MCF 10A (cell line): ENCODE measurements at regions of chr6 and their contacts with region 1.

Region 1: GRCh38 chr6:125191916-125192609 is 38.5 kb downstream of the TPD52L1 start:
- DNase-seq: peak; percentile 90
- H3K4me3 Mint-ChIP-seq: no peak overlapping the region
- H3K27ac Mint-ChIP-seq: peak overlapping the region; percentile 77
- H3K4me1 Mint-ChIP-seq: peaks cover 30% of the 10 kb centered on the region
- H3K27me3 Mint-ChIP-seq: no peaks in the 10 kb centered on the region
- CTCF ChIP-seq: peak; percentile 75

Region 2: GRCh38 chr6:125165256-125165655 is 26.8 kb before region 1 on chr6:
- CTCF ChIA-PET with region 1: interaction called, 13 read pairs
- POLR2A ChIA-PET with region 1: interaction called, 20 read pairs
- intact Hi-C with region 1: no loop called
- DNase-seq: no peak
- H3K4me3 Mint-ChIP-seq: no peak overlapping the region
- H3K27ac Mint-ChIP-seq: no peak overlapping the region
- H3K4me1 Mint-ChIP-seq: peaks cover 17% of the 10 kb centered on the region
- H3K27me3 Mint-ChIP-seq: no peaks in the 10 kb centered on the region
- CTCF ChIP-seq: no peak

Region 3: GRCh38 chr6:125175466-125176048 is 16.5 kb before region 1 on chr6:
- CTCF ChIA-PET with region 1: interaction called, 25 read pairs
- POLR2A ChIA-PET with region 1: interaction called, 20 read pairs
- intact Hi-C with region 1: no loop called
- DNase-seq: no peak
- H3K4me3 Mint-ChIP-seq: no peak overlapping the region
- H3K27ac Mint-ChIP-seq: no peak overlapping the region
- H3K4me1 Mint-ChIP-seq: peaks cover 3% of the 10 kb centered on the region
- H3K27me3 Mint-ChIP-seq: no peaks in the 10 kb centered on the region
- CTCF ChIP-seq: no peak

Region 4: GRCh38 chr6:125236536-125237327 is 44.7 kb after region 1 on chr6:
- CTCF ChIA-PET with region 1: interaction called, 11 read pairs
- POLR2A ChIA-PET with region 1: interaction called, 7 read pairs
- intact Hi-C with region 1: loop called (anchors 2 kb)
- DNase-seq: peak; percentile 74
- H3K4me3 Mint-ChIP-seq: no peak overlapping the region
- H3K27ac Mint-ChIP-seq: peak overlapping the region; percentile 53
- H3K4me1 Mint-ChIP-seq: peaks cover 27% of the 10 kb centered on the region
- H3K27me3 Mint-ChIP-seq: no peaks in the 10 kb centered on the region
- CTCF ChIP-seq: no peak

Region 5: GRCh38 chr6:125273965-125274364 is 81.9 kb after region 1 on chr6:
- CTCF ChIA-PET with region 1: interaction called, 14 read pairs
- POLR2A ChIA-PET with region 1: interaction called, 24 read pairs
- intact Hi-C with region 1: loop called (anchors 1 kb)
- DNase-seq: peak; percentile 99
- H3K4me3 Mint-ChIP-seq: peak overlapping the region; percentile 18
- H3K27ac Mint-ChIP-seq: peak overlapping the region; percentile 79
- H3K4me1 Mint-ChIP-seq: peaks cover 30% of the 10 kb centered on the region
- H3K27me3 Mint-ChIP-seq: no peaks in the 10 kb centered on the region
- CTCF ChIP-seq: no peak

Region 6: GRCh38 chr6:125314019-125314581 is 122.0 kb after region 1 on chr6:
- CTCF ChIA-PET with region 1: interaction called, 30 read pairs
- POLR2A ChIA-PET with region 1: interaction called, 3 read pairs
- intact Hi-C with region 1: no loop called
- DNase-seq: peak; percentile 73
- H3K4me3 Mint-ChIP-seq: no peak overlapping the region
- H3K27ac Mint-ChIP-seq: no peak overlapping the region
- H3K4me1 Mint-ChIP-seq: no peaks in the 10 kb centered on the region
- H3K27me3 Mint-ChIP-seq: peaks cover 12% of the 10 kb centered on the region
- CTCF ChIP-seq: peak; percentile 79

Region 7: DNA sequence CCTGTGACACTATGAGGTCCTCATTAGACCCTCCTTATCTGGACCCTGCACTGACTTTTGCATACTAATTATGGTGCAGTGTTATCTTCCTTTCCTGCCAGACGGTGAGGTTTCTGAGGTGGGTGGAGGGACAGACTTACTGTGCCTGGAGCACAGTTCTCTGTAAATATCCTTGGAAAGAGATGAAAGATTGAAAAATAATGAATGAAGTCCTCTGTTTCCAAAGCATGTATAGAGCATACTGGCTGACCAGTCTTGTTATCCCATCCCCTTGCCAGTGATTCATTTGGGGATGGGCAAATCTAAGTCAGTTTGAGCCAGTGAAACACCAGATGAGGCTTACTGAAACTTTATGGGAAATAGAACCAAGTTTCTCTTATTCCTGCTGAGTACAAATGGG is 262.3 kb after region 1 on chr6:
- CTCF ChIA-PET with region 1: no interaction called
- POLR2A ChIA-PET with region 1: no interaction called
- intact Hi-C with region 1: no loop called
- DNase-seq: no peak
- H3K4me3 Mint-ChIP-seq: no peak overlapping the region
- H3K27ac Mint-ChIP-seq: no peak overlapping the region
- H3K4me1 Mint-ChIP-seq: no peaks in the 10 kb centered on the region
- H3K27me3 Mint-ChIP-seq: peaks cover 44% of the 10 kb centered on the region
- CTCF ChIP-seq: no peak